ENCODE measurements at regions of chr11 and their contacts with region 1.

Region 1: DNA sequence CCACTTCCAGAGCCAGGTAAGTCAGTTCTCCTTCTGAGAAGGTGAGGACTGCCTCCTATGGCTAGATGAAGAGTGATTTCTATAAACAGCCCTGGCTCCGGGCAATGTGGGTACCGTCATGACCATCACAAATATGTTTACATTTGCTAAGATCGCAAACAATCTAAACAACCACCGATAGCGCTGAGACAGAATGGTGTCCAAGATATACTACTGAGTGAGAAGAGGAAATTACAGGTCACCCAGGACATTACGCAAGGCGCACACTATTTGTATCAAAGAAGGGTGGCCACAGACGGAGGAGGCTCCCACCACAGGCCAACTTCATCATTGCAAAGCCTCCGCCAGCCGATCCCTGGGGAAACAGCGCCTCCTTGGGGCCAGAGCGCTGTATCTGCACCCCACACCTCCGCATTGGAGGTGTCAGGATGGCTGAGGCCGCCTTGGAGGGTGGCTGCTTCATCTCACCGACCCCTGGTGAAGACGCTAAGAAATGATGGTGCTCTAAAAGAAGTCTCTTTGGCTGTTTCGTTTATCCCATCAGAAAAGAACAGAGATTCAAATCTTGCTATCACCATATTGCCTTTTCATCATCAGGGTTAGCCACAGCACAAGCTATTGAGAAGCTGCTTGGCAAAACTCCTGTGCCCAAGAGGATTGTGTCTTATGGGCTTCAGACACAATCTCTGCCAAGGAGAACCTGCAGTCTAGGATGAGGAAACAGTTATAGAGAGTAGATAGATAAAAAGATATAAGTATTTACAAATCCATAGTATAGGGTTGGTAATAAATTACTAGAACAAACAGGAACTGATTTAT is 12.3 kb upstream of the ASRGL1 start:
- DNase-seq: peak in 8 of 9 donors; percentile 43 to 60 (median 54)
- ATAC-seq: peak; percentile 98
- H3K4me3 ChIP-seq: no peak overlapping the region
- H3K4me3 Mint-ChIP-seq: no peak overlapping the region
- H3K27ac ChIP-seq: no peak overlapping the region
- H3K27ac Mint-ChIP-seq: no peak overlapping the region
- H3K4me1 ChIP-seq: no peaks in the 10 kb centered on the region
- H3K4me1 Mint-ChIP-seq: peaks cover 0 to 7% (median 0%) of the 10 kb centered on the region in 7 donors
- H3K27me3 ChIP-seq: no peaks in the 10 kb centered on the region
- H3K27me3 Mint-ChIP-seq: peaks cover 5 to 21% (median 9%) of the 10 kb centered on the region in 5 donors

Region 2: DNA sequence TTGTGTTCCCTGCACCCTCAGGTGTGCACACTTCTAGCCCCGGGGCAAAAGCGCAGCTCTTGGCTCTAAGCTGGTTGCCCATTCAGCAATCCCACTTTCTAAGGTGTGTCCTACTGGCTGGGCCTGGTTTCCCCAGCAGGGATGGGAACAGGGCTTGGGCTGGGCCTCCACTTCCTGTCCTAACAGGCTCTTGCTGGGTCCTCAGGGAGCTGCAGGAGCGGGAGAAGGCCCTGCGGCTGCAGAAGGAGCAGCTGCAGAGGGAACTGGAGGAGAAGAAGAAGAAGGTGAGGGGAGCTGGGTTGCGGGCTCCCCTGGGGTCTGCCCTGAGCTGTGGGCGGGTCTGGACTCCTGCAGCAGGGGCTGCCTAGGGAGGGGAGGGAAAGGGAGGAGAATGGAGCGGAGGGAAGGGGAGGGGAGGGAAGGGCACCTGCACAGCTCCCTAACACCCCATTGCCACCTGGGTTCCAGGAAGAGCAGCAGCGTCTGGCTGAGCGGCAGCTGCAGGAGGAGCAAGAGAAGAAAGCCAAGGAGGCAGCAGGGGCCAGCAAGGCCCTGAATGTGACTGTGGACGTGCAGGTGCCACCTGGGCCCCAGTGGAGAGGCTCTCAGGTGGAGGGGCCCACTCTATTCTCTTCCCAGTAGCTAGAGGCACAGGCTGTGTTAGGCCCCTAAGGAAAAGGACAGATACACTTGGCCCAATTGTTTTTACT is 176.5 kb before region 1 on chr11:
- CTCF ChIA-PET with region 1: no interaction called
- POLR2A ChIA-PET with region 1: no interaction called
- intact Hi-C with region 1: no loop called
- DNase-seq: peak in 1 of 9 donors; percentile 7
- ATAC-seq: no peak
- H3K4me3 ChIP-seq: no peak overlapping the region
- H3K4me3 Mint-ChIP-seq: no peak overlapping the region
- H3K27ac ChIP-seq: no peak overlapping the region
- H3K27ac Mint-ChIP-seq: no peak overlapping the region
- H3K4me1 ChIP-seq: no peaks in the 10 kb centered on the region
- H3K4me1 Mint-ChIP-seq: peaks cover 0 to 2% (median 0%) of the 10 kb centered on the region in 7 donors
- H3K27me3 ChIP-seq: no peaks in the 10 kb centered on the region
- H3K27me3 Mint-ChIP-seq: no peaks in the 10 kb centered on the region

Region 3: DNA sequence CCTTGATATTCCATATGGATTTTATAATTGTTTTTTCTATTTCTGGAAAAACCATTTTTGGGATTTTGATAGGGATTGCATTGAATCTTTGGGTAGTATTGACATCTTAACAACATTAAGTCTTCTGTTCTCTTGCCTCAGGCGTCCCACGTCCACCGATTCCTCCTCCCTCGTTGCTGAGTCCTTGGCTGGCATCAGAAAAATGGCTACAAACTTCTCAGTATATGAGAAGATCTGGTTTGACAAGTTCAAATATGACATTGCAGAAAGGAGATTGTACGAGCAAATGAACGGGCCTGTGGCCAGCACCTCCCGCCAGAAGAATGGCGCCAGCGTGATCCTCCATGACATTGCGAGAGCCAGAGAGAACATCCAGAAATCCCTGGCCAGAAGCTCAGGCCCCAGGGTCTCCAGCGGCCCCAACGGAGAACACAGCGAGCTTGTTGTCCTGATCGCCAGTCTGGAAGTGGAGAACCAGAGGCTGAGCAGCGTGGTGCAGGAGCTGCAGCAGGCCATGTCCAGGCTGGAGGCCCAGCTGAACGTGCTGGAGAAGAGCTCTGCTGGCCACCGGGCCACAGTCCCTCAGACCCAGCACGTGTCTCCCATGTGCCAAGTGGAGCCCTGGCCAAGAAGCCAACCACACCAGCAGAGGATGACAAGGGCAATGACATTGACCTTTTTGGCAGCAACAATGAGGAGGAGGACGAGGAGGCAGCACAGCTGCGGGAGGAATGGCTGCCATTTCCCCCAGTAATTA is 155.7 kb before region 1 on chr11:
- CTCF ChIA-PET with region 1: no interaction called
- POLR2A ChIA-PET with region 1: no interaction called
- intact Hi-C with region 1: loop called in 1 of 2 experiments (anchors 1 kb)
- DNase-seq: no peak
- ATAC-seq: no peak
- H3K4me3 ChIP-seq: no peak overlapping the region
- H3K4me3 Mint-ChIP-seq: no peak overlapping the region
- H3K27ac ChIP-seq: no peak overlapping the region
- H3K27ac Mint-ChIP-seq: no peak overlapping the region
- H3K4me1 ChIP-seq: peaks cover 0 to 4% of the 10 kb centered on the region in 2 donors
- H3K4me1 Mint-ChIP-seq: peaks cover 0 to 5% (median 5%) of the 10 kb centered on the region in 7 donors
- H3K27me3 ChIP-seq: no peaks in the 10 kb centered on the region
- H3K27me3 Mint-ChIP-seq: peaks cover 30 to 40% (median 34%) of the 10 kb centered on the region in 5 donors

Region 4: GRCh38 chr11:62217191-62217748 is 107.7 kb before region 1 on chr11:
- CTCF ChIA-PET with region 1: no interaction called
- POLR2A ChIA-PET with region 1: no interaction called
- intact Hi-C with region 1: loop called in 1 of 2 experiments (anchors 1 kb)
- DNase-seq: no peak
- ATAC-seq: no peak
- H3K4me3 ChIP-seq: no peak overlapping the region
- H3K4me3 Mint-ChIP-seq: no peak overlapping the region
- H3K27ac ChIP-seq: no peak overlapping the region
- H3K27ac Mint-ChIP-seq: no peak overlapping the region
- H3K4me1 ChIP-seq: no peaks in the 10 kb centered on the region
- H3K4me1 Mint-ChIP-seq: no peaks in the 10 kb centered on the region
- H3K27me3 ChIP-seq: no peaks in the 10 kb centered on the region
- H3K27me3 Mint-ChIP-seq: peaks cover 14 to 42% (median 24%) of the 10 kb centered on the region in 5 donors